WTC11 (cell line): ENCODE measurements at regions of chr2 and their contacts with region 1.

Region 1: GRCh38 chr2:203814661-203815540 is 52.7 kb upstream of the CTLA4 start:
- DNase-seq: peak; percentile 50
- ATAC-seq: peak; percentile 98
- H3K4me3 Mint-ChIP-seq: no peak overlapping the region
- H3K27ac Mint-ChIP-seq: no peak overlapping the region
- H3K4me1 Mint-ChIP-seq: peaks cover 11% of the 10 kb centered on the region
- H3K27me3 Mint-ChIP-seq: no peaks in the 10 kb centered on the region
- CTCF ChIP-seq: no peak

Region 2: DNA sequence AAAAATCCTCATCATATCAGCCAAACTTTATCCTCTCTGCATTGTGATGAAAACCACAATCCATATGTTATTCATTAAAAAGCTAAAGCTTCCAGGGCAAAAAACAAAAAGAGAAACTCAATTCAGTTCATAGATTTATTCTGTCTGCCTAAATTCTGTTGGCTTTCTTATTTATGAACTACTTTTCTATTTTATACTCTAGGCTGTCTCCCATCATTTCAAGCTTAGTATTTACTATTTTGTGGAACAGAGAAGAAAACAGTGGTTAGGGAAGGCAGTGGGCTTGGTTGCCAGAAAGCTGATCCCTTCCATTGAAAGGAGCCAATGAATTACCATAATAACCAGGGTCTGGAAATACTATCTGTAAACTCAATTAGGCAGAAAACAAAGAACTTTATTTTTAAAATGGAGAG is 351.6 kb before region 1 on chr2:
- CTCF ChIA-PET with region 1: interaction called, 10 read pairs
- POLR2A ChIA-PET with region 1: no interaction called
- DNase-seq: no peak
- ATAC-seq: no peak
- H3K4me3 Mint-ChIP-seq: no peak overlapping the region
- H3K27ac Mint-ChIP-seq: no peak overlapping the region
- H3K4me1 Mint-ChIP-seq: peaks cover 3% of the 10 kb centered on the region
- H3K27me3 Mint-ChIP-seq: no peaks in the 10 kb centered on the region
- CTCF ChIP-seq: no peak

Region 3: GRCh38 chr2:203484266-203485112 is 330.4 kb before region 1 on chr2:
- CTCF ChIA-PET with region 1: interaction called, 21 read pairs
- POLR2A ChIA-PET with region 1: no interaction called
- DNase-seq: no peak
- ATAC-seq: peak; percentile 87
- H3K4me3 Mint-ChIP-seq: no peak overlapping the region
- H3K27ac Mint-ChIP-seq: no peak overlapping the region; the same call in 1 of the 2 replicates
- H3K4me1 Mint-ChIP-seq: peaks cover 13% of the 10 kb centered on the region
- H3K27me3 Mint-ChIP-seq: no peaks in the 10 kb centered on the region
- CTCF ChIP-seq: peak; percentile 27; the same call in 1 of the 2 replicates

Region 4: DNA sequence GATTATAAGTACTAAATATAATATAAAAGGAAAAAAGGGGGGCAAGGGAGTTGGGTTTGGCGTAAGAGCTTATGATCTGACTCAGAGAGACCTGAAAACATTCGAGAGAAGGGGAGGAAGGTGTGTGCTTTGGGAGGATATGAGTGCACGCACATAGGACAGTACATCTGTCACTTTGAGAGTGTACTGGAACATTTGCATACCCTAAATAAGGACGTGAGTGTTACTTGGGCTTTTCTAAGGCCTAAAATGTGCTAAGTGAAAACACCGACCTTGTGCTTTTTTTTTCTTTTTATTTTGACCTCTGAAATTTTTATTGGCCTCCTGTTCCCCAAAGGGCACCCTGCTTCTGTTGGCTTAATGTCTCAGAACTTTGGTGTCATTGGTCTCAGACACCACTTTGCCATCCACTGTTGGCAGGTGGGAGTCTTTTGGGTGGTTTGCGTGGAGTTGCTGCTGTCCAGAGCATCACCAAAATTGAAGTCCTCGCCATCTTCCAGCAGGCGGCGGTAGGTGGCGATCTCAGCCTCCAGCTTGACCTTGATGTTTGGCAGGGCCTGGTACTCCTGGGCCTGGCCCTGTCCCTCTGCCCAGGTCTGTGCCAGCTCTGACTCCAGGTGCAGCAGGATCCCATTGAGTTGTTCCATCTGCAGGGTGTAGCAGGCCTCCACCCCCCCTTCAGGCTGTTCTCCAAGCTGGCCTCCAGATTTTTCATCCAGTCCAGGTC is 50.8 kb before region 1 on chr2:
- CTCF ChIA-PET with region 1: interaction called, 15 read pairs
- POLR2A ChIA-PET with region 1: no interaction called
- DNase-seq: peak; percentile 44
- ATAC-seq: no peak
- H3K4me3 Mint-ChIP-seq: no peak overlapping the region
- H3K27ac Mint-ChIP-seq: no peak overlapping the region
- H3K4me1 Mint-ChIP-seq: peaks cover 10% of the 10 kb centered on the region
- H3K27me3 Mint-ChIP-seq: no peaks in the 10 kb centered on the region
- CTCF ChIP-seq: peak; percentile 9; the same call in 1 of the 2 replicates

Region 5: GRCh38 chr2:203909261-203909967 is 94.5 kb after region 1 on chr2:
- CTCF ChIA-PET with region 1: interaction called, 10 read pairs
- POLR2A ChIA-PET with region 1: no interaction called
- DNase-seq: no peak
- ATAC-seq: peak; percentile 85
- H3K4me3 Mint-ChIP-seq: no peak overlapping the region
- H3K27ac Mint-ChIP-seq: no peak overlapping the region
- H3K4me1 Mint-ChIP-seq: peaks cover 4% of the 10 kb centered on the region
- H3K27me3 Mint-ChIP-seq: no peaks in the 10 kb centered on the region
- CTCF ChIP-seq: no peak; the same call in 1 of the 2 replicates